ENCODE measurements at regions of chr17 and their contacts with region 1.

Region 1: DNA sequence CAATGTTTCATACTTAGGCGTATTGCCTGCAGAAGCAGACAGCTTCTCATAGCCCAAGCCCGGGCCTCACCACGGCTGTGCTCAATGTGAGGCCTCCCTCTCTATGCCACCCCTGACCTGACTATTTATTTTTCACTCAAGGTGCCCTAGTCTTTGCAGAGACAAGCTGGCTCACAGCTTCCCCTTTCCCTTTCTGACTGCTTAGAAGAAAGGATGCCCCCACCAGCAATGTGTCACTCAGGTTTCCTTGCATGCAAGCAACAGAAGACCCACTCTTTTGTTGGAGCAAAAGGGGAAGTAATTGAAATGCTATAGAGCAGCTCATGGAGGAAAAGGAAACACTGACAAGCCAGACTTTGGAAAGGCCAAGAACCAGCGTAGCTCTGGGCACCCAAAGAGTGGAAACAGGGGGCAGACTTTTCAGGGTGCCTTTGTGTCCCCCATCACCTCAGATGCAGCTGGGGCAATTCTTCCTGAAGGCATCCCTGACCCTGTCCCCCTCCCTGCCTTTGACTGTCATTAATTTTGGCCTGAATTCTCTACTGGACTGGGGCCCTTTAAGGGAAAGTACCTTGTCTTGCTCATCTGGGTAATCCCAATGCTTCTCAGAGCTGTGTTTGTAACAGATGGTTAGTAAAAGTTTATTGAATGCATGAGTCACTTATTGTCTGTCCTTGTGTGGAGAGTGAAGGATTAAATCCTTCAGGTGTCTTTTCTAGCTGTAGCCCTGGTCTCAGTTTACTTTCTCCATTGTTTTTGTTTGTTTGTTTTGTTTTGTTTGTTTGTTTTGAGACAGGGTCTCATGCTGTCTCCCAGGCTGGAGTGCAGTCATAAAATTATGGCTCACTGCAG is 17.8 kb downstream of the RGS9 start:
- DNase-seq: no peak
- ATAC-seq: peak; percentile 66
- H3K4me3 Mint-ChIP-seq: no peak overlapping the region
- H3K27ac Mint-ChIP-seq: no peak overlapping the region
- H3K4me1 Mint-ChIP-seq: peaks cover 13% of the 10 kb centered on the region
- H3K27me3 Mint-ChIP-seq: peaks cover 14% of the 10 kb centered on the region

Region 2: DNA sequence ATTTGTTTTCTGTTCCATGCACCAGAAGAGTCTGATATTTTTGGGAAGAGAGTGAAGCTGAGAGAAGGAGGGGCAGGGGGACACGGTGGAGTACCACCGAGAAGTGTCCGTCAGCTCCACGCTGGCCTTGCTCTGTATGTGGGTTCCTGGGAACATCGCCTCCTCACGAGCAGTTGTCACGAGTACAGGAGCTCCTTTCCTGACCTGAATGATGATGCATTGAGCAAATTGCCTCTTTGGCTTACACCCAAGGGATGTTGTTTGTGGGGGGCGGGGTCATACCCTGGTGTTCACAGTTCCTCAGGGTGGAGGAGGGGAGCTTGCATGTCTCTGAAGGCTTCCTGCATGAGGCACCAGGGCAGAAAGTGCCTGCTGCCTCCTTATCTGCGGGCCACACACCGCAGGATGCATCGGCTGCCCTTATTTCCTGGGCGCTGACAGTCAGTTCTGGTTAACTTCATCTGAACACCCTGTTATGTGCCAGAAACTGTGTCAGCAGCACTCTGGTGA is 18.3 kb after region 1 on chr17:
- CTCF ChIA-PET with region 1: interaction called, 11 read pairs
- DNase-seq: peak; percentile 94
- ATAC-seq: peak; percentile 92
- H3K4me3 Mint-ChIP-seq: no peak overlapping the region
- H3K27ac Mint-ChIP-seq: no peak overlapping the region
- H3K4me1 Mint-ChIP-seq: peaks cover 31% of the 10 kb centered on the region
- H3K27me3 Mint-ChIP-seq: no peaks in the 10 kb centered on the region

Region 3: DNA sequence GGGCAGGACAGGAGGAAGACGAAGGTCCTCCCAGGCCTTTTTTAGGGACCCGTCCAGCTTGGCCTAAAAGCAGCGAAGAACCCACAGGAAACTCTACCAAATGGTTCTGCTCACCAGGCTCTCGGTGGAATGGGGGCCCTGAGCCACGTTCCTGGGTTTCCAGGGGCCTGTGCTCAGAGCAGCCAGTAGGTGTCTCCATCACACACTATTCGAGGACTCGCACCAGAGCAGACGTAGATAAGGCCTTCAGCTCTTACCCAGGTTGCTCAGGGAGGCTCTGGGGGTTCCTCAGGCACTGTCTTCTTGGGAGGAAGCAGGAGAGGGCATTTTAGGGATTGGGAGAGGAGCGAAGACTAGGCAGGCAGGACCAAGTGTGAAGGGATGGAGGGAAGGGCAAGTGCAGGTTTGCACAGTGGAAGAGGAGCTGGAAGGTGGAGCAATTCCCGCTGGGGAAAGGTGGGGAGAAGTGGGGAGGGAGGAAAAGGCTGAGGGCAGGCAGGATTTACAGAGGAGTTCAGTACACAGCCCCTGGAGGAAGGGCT is 139.3 kb after region 1 on chr17:
- CTCF ChIA-PET with region 1: no interaction called
- DNase-seq: peak; percentile 70
- ATAC-seq: peak; percentile 87
- H3K4me3 Mint-ChIP-seq: no peak overlapping the region
- H3K27ac Mint-ChIP-seq: no peak overlapping the region
- H3K4me1 Mint-ChIP-seq: no peaks in the 10 kb centered on the region
- H3K27me3 Mint-ChIP-seq: peaks cover 25% of the 10 kb centered on the region